MCF 10A (cell line): ENCODE measurements at regions of chr13 and their contacts with region 1.

Region 1: DNA sequence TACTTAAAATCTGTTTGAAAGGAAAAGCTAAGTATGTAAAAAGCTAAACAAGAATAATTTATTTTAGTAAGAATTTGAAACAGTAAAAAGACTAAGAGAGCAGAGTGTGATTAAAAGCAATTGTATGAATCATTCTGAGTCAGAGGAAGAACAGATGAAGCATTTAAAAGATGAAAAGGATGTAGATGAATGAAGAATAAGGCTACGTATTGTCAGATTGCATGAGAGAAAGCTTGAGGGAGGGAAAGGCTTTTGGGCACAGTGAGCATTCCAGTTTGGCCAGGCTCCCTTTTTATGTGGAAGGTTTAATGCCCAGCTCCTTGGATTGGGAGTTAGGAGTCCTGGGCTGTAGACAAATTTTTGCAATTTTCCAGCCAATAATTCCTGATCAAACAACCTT is 117.7 kb downstream of the FREM2 start:
- DNase-seq: peak; percentile 15
- H3K4me3 Mint-ChIP-seq: no peak overlapping the region
- H3K27ac Mint-ChIP-seq: no peak overlapping the region
- H3K4me1 Mint-ChIP-seq: peaks cover 5% of the 10 kb centered on the region
- H3K27me3 Mint-ChIP-seq: no peaks in the 10 kb centered on the region
- CTCF ChIP-seq: no peak

Region 2: GRCh38 chr13:38662362-38662761 is 142.2 kb before region 1 on chr13:
- CTCF ChIA-PET with region 1: no interaction called
- POLR2A ChIA-PET with region 1: no interaction called
- intact Hi-C with region 1: no loop called
- DNase-seq: peak; percentile 53
- H3K4me3 Mint-ChIP-seq: no peak overlapping the region
- H3K27ac Mint-ChIP-seq: no peak overlapping the region
- H3K4me1 Mint-ChIP-seq: peaks cover 2% of the 10 kb centered on the region
- H3K27me3 Mint-ChIP-seq: peaks cover 24% of the 10 kb centered on the region
- CTCF ChIP-seq: no peak

Region 3: DNA sequence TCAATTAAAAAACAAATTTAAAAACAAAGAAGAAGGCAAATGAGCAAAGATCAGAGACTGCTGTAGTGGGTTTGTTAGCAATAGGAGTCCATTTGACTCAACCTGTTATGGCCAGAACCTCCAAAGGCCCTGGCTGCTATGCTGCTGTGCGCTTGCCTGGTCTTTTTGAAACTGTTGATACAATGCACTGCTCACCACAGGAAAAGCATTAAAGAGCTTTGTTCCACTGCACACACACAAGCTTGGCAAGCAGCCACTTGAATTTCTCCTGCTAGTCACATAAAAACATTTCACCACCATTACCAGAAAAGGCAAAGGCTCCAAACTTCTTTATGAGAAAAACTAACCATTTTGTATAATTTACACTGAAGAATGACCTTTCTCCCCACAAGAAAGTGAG is 14.5 kb after region 1 on chr13:
- CTCF ChIA-PET with region 1: no interaction called
- POLR2A ChIA-PET with region 1: no interaction called
- intact Hi-C with region 1: loop called (anchors 1 kb)
- DNase-seq: peak; percentile 7
- H3K4me3 Mint-ChIP-seq: no peak overlapping the region
- H3K27ac Mint-ChIP-seq: no peak overlapping the region
- H3K4me1 Mint-ChIP-seq: no peaks in the 10 kb centered on the region
- H3K27me3 Mint-ChIP-seq: no peaks in the 10 kb centered on the region
- CTCF ChIP-seq: no peak